ENCODE measurements at regions of chr18 and their contacts with region 1.

Region 1: GRCh38 chr18:67199993-67200617 is 316.4 kb downstream of the DSEL start:
- DNase-seq: peak; percentile 10
- H3K4me3 ChIP-seq: no peak overlapping the region
- H3K27me3 ChIP-seq: no peaks in the 10 kb centered on the region; the same call in 1 of the 2 replicates
- CTCF ChIP-seq: peak; percentile 54

Region 2: DNA sequence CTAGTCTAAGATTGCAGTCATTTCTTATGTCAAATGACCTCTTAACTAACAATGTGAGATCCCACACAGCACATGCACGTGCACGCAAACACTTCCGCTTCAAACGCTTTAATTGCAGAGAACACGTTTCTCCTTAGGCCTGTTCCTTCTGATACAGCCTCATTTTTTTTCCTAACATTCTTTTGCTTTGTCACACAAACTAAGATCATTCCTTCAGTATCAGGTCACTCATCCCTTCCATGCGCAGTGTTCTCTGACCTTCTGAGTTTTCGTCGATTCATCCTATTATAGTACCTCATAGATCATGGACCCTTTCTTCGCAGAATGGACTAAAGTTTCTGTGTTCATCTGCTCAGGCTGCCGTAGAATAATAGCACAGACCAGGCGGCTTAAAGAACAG is 269.1 kb before region 1 on chr18:
- CTCF ChIA-PET with region 1: no interaction called
- POLR2A ChIA-PET with region 1: no interaction called
- DNase-seq: no peak
- H3K4me3 ChIP-seq: no peak overlapping the region
- H3K27me3 ChIP-seq: no peaks in the 10 kb centered on the region
- CTCF ChIP-seq: no peak

Region 3: GRCh38 chr18:67104700-67105284 is 95.3 kb before region 1 on chr18:
- CTCF ChIA-PET with region 1: interaction called, 41 read pairs
- POLR2A ChIA-PET with region 1: no interaction called
- DNase-seq: no peak
- H3K4me3 ChIP-seq: no peak overlapping the region
- H3K27me3 ChIP-seq: no peaks in the 10 kb centered on the region
- CTCF ChIP-seq: peak; percentile 76

Region 4: GRCh38 chr18:67250776-67251424 is 50.8 kb after region 1 on chr18:
- CTCF ChIA-PET with region 1: no interaction called
- POLR2A ChIA-PET with region 1: no interaction called
- DNase-seq: no peak
- H3K4me3 ChIP-seq: no peak overlapping the region
- H3K27me3 ChIP-seq: no peaks in the 10 kb centered on the region
- CTCF ChIP-seq: no peak

Region 5: GRCh38 chr18:67475673-67476072 is 275.6 kb after region 1 on chr18:
- CTCF ChIA-PET with region 1: no interaction called
- POLR2A ChIA-PET with region 1: no interaction called
- DNase-seq: no peak
- H3K4me3 ChIP-seq: no peak overlapping the region
- H3K27me3 ChIP-seq: no peaks in the 10 kb centered on the region
- CTCF ChIP-seq: no peak

Measured in BJ (cell line).